Activated CD4-positive, alpha-beta T cell treated with anti-CD3 and anti-CD28 coated beads for 36 hours (primary cell): ENCODE measurements at regions of chr9 and their contacts with region 1.

Region 1: DNA sequence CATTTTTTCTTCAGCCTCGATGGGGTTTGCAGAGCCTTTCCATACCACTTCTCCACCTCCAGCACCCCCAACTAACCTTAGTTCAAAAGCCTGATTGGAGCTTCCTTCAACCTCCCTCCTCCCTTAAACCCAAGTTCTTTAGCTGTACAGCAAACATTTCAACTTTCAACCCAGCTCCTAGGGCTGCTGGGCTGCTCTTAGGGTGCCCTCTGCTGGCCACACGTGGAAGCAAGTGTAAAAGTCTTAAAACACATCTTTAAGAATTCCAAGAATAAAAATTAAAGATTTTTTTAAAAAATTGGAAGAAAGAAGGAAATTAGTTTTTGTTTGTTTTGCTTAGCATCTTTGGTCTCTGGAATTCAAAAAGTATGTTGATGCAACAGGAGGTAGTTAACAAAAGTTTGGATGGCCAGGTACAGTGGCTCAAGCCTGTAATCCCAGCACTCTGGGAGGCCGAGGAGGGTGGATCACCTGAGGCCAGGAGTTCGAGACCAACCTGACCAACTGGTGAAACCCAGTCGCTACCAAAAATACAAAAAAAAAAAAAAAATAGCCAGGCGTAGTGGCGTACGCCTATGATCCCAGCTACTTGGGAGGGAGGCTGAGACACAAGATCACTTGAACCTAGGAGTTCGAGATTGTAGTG is 15.5 kb upstream of the HSD17B3 start:
- DNase-seq: peak; percentile 71
- ATAC-seq: no peak
- H3K4me3 Mint-ChIP-seq: no peak overlapping the region
- H3K27ac Mint-ChIP-seq: no peak overlapping the region
- H3K4me1 Mint-ChIP-seq: no peaks in the 10 kb centered on the region
- H3K27me3 Mint-ChIP-seq: peaks cover 2% of the 10 kb centered on the region

Region 2: DNA sequence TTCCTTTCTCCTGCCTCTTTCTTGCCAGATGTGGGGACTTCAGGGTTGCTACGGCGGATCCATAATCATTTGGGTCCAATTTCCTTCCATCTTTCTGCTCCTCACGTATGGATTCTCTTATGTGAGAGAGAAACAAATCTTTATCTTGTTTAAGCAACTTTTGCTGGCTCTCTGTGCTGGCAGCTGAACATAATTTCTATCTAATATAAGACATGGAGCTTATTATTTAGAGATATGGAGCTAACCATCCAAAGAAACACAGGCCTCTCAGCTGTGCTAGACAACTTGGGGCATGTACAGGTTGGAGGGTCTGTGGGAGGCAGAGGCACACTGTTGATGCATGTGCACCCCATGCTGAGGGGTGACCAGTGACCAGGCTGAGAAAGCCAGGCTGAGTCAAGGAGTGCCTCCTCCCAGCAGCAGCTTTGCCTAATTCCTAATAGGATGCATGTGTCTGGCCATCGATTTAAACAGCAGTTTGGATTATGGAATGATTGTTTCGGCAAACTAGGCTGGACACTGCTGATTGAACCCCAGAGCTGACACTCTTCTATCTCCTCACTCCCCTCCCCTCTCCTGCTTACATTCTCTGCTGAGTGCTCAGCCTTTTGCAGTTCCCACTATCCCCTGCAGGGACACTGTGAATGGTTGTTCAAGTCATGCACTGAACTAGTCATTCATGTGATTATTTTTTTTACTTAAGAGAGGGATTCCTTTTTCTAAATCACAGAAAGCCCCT is 246.2 kb before region 1 on chr9:
- CTCF ChIA-PET with region 1: no interaction called
- POLR2A ChIA-PET with region 1: no interaction called
- intact Hi-C with region 1: loop called in 1 of 2 experiments (anchors 10 kb)
- DNase-seq: peak; percentile 53
- ATAC-seq: peak; percentile 61
- H3K4me3 Mint-ChIP-seq: no peak overlapping the region
- H3K27ac Mint-ChIP-seq: no peak overlapping the region
- H3K4me1 Mint-ChIP-seq: no peaks in the 10 kb centered on the region
- H3K27me3 Mint-ChIP-seq: peaks cover 3% of the 10 kb centered on the region

Region 3: DNA sequence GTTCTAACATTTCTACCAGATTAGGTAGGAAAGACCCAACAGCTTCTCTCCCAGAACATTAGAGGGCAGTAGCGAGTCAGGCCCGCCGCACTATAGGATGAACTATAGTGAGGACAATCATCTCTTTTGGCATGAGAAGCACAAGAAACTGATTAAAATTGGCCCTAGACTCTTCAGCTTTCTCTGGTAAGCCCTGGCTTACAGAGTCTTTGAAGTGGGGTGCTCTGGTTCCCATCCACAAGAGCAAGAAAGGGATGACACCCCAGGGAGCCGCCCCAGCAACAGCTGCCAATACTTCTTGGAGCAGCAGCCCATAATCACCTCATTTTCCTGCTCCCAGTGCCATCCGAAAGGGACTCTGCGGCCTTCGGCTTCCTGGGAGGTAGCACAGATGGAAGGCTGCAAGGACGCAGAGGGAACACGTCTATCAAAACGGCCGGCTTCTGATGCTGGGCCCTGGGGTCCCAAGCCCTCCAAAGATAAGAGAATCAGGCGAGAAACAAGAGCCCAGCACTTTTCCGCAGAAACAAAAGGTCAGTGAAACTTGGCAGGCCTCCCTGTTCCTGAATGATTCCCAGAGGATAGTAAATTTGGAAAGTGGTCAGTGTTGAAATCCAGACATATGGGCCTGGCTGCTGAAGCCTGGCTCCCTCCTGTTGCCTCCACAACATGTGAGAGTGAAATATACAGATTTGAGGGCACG is 84.8 kb before region 1 on chr9:
- CTCF ChIA-PET with region 1: interaction called, 23 read pairs
- POLR2A ChIA-PET with region 1: no interaction called
- intact Hi-C with region 1: loop called (anchors 1 kb)
- DNase-seq: peak; percentile 66
- ATAC-seq: peak; percentile 82
- H3K4me3 Mint-ChIP-seq: no peak overlapping the region
- H3K27ac Mint-ChIP-seq: no peak overlapping the region
- H3K4me1 Mint-ChIP-seq: no peaks in the 10 kb centered on the region
- H3K27me3 Mint-ChIP-seq: peaks cover 46% of the 10 kb centered on the region

Region 4: DNA sequence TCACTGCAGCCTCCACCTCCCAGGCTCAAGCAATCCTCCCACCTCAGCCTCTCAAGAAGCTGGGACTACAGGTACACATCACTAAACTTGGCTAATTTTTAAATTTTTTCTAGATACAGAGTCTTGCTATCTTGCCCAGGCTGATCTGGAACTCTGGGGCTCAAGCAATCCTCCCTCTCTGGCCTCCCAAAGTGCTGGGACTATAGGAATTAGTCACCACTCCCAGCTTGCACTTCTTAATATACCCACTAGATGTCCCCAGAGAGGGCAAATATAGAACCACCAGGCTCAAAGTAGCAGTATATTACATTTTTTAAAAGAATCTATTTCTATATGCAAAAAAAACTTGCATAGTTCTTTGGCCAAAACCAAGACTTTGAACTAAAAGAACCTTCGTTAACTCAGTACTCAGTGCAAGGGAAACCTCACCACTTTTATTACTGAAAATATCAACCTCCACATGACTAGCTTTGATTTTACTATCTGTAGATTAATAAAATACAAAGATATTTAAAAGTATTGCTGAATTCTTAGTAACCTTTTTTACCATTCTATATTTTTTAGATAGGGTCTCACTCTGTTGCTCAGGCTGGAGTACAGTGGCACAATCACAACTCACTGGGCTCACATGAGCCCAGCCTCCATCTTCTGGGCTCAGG is 10.4 kb after region 1 on chr9:
- CTCF ChIA-PET with region 1: interaction called, 43 read pairs
- POLR2A ChIA-PET with region 1: no interaction called
- intact Hi-C with region 1: no loop called
- DNase-seq: peak; percentile 57
- ATAC-seq: peak; percentile 81
- H3K4me3 Mint-ChIP-seq: no peak overlapping the region
- H3K27ac Mint-ChIP-seq: no peak overlapping the region
- H3K4me1 Mint-ChIP-seq: no peaks in the 10 kb centered on the region
- H3K27me3 Mint-ChIP-seq: no peaks in the 10 kb centered on the region